ENCODE measurements at regions of chr19 and their contacts with region 1.

Region 1: GRCh38 chr19:10194500-10195289 is at the start of gene DNMT1:
- DNase-seq: peak; percentile 91
- H3K4me3 ChIP-seq: peak within 1 kb of the TSS; percentile 60 to 88
- H3K27ac ChIP-seq: peak within 1 kb of the TSS; percentile 81 to 88
- H3K4me1 ChIP-seq: peaks cover 5% of the 10 kb centered on the region
- H3K27me3 ChIP-seq: no peaks in the 10 kb centered on the region
- CTCF ChIP-seq: peak in 2 of 4 experiments; percentile 4 to 7
- POLR2A ChIP-seq: peak; percentile 35
- total RNA-seq, gene DNMT1: 29.9 to 50.0 TPM

Region 2: DNA sequence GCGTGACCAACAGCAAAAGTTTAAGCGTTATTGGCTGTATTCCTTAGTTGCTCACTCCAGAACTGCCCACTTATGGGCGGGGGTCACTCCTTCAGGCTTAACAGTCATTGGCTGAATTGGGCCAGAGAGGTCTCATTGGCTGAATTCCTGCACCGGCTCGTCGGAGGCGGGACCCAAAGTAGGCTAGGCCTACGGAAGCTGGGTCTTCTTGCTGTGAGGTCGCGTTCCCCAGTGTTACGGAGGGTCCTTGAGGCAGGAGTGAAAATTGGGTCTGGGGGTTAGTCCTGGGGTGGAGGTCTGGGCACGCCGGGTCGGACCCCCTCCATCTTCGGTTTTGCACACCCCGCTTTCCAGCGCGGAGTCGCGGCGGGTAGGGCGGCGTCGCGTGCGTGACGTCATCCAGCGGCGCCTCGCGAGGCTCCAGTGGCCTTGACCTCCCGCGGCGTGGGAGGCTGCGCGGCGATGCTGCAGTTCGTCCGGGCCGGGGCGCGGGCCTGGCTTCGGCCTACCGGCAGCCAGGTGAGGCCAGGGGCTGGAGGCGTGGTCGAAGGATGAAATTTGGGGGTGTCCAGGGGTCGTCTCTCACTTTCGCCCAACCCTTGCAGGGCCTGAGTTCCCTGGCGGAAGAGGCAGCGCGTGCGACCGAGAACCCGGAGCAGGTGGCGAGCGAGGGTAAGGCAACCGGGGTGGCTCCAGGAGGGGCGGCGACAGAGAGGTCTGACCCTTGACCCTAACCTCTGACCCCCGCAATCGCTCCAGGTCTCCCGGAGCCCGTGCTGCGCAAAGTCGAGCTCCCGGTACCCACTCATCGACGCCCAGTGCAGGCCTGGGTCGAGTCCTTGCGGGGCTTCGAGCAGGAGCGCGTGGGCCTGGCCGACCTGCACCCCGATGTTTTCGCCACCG is 57.3 kb after region 1 on chr19 and contains the start of gene MRPL4:
- intact Hi-C with region 1: loop called (anchors 2 kb)
- DNase-seq: peak; percentile 97
- H3K4me3 ChIP-seq: peak within 1 kb of the TSS; percentile 85 to 93
- H3K27ac ChIP-seq: peak within 1 kb of the TSS; percentile 70 to 73
- H3K4me1 ChIP-seq: peaks cover 4% of the 10 kb centered on the region
- H3K27me3 ChIP-seq: no peaks in the 10 kb centered on the region
- CTCF ChIP-seq: peak in 2 of 4 experiments; percentile 15 to 32
- POLR2A ChIP-seq: peak; percentile 26
- total RNA-seq, gene MRPL4: 72.6 to 75.6 TPM